GM12878 (cell line): ENCODE measurements at regions of chr3 and their contacts with region 1.

Region 1: DNA sequence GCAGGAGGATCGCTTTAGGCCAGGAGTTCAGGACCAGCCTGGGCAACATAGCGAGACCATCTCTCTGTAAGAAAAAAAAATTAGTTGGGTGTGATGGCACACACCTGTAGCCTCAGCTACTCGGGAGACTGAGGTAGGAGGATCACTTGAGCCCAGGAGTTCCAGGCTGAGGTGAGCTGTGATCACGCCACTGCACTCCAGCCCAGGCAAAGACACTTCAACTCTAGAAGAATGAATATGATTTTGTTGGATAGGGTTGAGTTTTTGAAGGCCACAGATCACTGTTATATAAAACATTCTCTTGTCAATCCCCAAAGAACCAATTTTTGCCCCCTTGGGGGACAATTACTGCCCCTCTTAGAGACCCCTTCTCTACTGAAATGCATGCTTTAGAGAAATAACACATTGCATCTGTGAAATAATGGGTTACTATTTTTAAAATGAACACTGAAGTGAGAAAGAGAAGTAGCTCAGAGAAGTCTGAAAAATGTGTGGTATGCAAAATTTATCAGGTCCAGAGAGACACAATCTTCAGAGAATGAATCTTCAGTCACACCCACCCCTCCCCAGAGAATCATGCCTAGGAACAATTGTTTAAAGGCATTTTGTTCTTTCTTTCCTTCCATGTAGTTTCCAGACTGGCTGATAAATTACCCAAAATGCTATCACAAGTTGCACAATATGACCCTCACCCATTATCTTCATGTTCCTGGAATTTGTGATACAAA is 42.7 kb downstream of the METTL6 start:
- DNase-seq: peak; percentile 84
- ATAC-seq: peak; percentile 87
- H3K4me3 ChIP-seq: peak overlapping the region; percentile 48; the same call in 1 of the 2 replicates
- H3K27ac ChIP-seq: peak overlapping the region; percentile 93
- H3K4me1 ChIP-seq: peaks cover 66% of the 10 kb centered on the region
- H3K27me3 ChIP-seq: no peaks in the 10 kb centered on the region
- CTCF ChIP-seq: no peak
- EP300 ChIP-seq: peak; percentile 86 to 93
- POLR2A ChIP-seq: no peak
- RAD21 ChIP-seq: 0 out of 2 replicates have a peak, but pooled peaks have one; percentile 1

Region 2: GRCh38 chr3:15159501-15160136 is 225.1 kb before region 1 on chr3:
- CTCF ChIA-PET with region 1: no interaction called
- POLR2A ChIA-PET with region 1: no interaction called
- RAD21 ChIA-PET with region 1: no interaction called
- SMC1A ChIA-PET with region 1: no interaction called
- in situ Hi-C with region 1: no loop called
- intact Hi-C with region 1: no loop called
- DNase-seq: peak; percentile 11
- ATAC-seq: peak; percentile 91
- H3K4me3 ChIP-seq: no peak overlapping the region
- H3K27ac ChIP-seq: no peak overlapping the region
- H3K4me1 ChIP-seq: no peaks in the 10 kb centered on the region
- H3K27me3 ChIP-seq: peaks cover 0 to 8% of the 10 kb centered on the region in 2 experiments; a peak in 1 of 4 replicates
- CTCF ChIP-seq: no peak
- EP300 ChIP-seq: no peak
- POLR2A ChIP-seq: no peak
- RAD21 ChIP-seq: no peak

Region 3: GRCh38 chr3:15291589-15292541 is 92.8 kb before region 1 on chr3:
- CTCF ChIA-PET with region 1: interaction called, 4 read pairs
- POLR2A ChIA-PET with region 1: interaction called, 6 read pairs
- RAD21 ChIA-PET with region 1: interaction called, 12 read pairs
- SMC1A ChIA-PET with region 1: interaction called, 8 read pairs
- in situ Hi-C with region 1: no loop called
- intact Hi-C with region 1: no loop called
- DNase-seq: peak; percentile 89
- ATAC-seq: peak; percentile 95
- H3K4me3 ChIP-seq: peak overlapping the region; percentile 17; the same call in 1 of the 2 replicates
- H3K27ac ChIP-seq: peak overlapping the region; percentile 73
- H3K4me1 ChIP-seq: peaks cover 38% of the 10 kb centered on the region
- H3K27me3 ChIP-seq: no peaks in the 10 kb centered on the region
- CTCF ChIP-seq: no peak
- EP300 ChIP-seq: peak; percentile 61 to 64; a peak in 3 of 4 replicates
- POLR2A ChIP-seq: no peak
- RAD21 ChIP-seq: no peak

Region 4: DNA sequence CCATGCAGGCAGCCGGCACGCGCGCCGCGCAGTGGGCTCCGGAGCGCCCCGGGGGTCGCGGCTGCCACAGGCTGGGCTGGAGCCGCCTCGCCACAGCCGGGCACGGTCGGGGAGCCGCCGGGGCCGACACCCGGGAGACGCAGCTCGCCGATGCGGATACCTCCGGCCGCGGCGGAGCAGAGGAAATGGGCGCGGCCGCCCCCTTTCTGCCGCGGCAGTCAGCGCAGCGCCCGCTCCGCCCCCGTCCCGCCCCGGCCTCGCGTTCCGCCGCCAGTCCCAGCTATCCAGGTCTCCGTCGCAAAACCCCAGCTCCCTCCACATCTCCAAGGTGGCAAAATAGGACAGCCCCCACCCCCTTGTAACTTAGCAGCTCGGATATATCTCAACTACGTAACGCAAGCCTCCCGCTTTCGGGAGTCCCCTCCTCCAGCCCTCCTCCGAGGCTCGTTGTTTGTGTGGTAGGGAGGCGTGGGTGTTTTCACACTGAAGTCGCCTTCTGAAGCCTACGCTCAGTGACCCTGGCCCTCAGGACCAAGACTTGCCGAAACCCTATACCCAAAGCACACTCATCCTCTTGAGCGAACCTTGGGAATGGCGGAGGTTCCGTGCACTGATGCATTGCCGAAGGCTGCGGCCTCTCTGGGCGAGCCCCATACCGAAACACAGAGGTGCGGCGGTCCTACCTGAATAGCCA is 52.1 kb before region 1 on chr3 and contains the start of gene SH3BP5:
- CTCF ChIA-PET with region 1: interaction called, 11 read pairs
- POLR2A ChIA-PET with region 1: interaction called, 5 read pairs
- RAD21 ChIA-PET with region 1: interaction called, 12 read pairs
- SMC1A ChIA-PET with region 1: interaction called, 10 read pairs
- in situ Hi-C with region 1: no loop called
- intact Hi-C with region 1: no loop called
- DNase-seq: no peak
- ATAC-seq: peak; percentile 85
- H3K4me3 ChIP-seq: peak within 1 kb of the TSS; percentile 86
- H3K27ac ChIP-seq: peak within 1 kb of the TSS; percentile 41
- H3K4me1 ChIP-seq: peaks cover 36% of the 10 kb centered on the region
- H3K27me3 ChIP-seq: no peaks in the 10 kb centered on the region
- CTCF ChIP-seq: peak; percentile 53 to 67 (median 59); a peak in 5 of 6 replicates
- EP300 ChIP-seq: no peak; a peak in 1 of 4 replicates
- POLR2A ChIP-seq: peak; percentile 84
- RAD21 ChIP-seq: peak; percentile 31; the same call in 1 of the 2 replicates
- polyA plus RNA-seq, gene SH3BP5: 14.9 to 33.8 TPM

Region 5: DNA sequence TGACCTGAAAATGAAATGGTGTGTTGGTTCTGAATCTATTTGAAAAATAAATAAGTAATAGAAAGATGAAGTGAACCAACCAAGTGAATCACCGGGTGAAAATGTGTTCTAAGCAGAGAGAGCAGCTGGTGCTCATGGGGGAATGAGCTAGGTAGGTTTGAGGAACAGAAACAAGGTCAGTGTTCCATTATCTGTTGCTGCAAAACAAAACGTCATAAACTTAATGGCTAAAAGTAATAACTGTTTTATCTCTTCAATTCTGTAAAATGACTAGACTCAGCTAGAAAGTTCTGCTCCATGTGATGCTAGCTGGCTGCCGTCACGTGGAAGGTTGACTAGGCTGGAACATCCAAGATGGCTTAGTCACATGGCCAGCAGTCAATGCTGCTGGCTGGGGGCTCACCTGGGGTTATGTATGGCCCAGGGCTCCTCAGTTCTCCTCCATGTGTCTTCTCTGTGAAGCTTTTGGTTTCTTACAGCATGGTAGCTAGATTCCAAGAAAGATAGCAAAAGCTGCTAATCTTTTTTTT is 39.0 kb before region 1 on chr3:
- CTCF ChIA-PET with region 1: interaction called, 5 read pairs
- POLR2A ChIA-PET with region 1: interaction called, 7 read pairs
- RAD21 ChIA-PET with region 1: interaction called, 14 read pairs
- SMC1A ChIA-PET with region 1: interaction called, 5 read pairs
- in situ Hi-C with region 1: no loop called
- intact Hi-C with region 1: no loop called
- DNase-seq: peak; percentile 86
- ATAC-seq: peak; percentile 94
- H3K4me3 ChIP-seq: no peak overlapping the region
- H3K27ac ChIP-seq: peak overlapping the region; percentile 83
- H3K4me1 ChIP-seq: peaks cover 42% of the 10 kb centered on the region
- H3K27me3 ChIP-seq: no peaks in the 10 kb centered on the region
- CTCF ChIP-seq: no peak
- EP300 ChIP-seq: peak; percentile 85 to 88
- POLR2A ChIP-seq: peak; percentile 59
- RAD21 ChIP-seq: no peak

Region 6: DNA sequence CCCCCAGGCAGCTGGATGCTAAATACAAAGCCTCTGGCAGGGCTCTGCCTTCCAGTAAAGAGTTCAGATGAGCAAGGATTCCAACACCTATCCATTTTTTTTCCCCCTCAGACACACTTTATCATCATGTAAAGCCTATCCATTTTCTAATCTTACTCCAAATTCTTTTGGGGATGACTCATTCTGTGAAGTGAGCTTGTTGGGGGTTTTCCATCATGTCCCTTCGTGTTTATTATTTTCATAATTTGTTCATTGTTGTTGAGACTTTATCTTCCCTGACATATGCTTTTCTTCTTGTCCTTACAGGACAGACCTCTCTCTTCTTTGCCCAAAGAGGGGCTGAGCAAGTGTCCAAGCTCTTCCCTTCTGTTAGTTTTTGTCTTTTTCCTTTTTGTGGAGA is 17.6 kb before region 1 on chr3:
- CTCF ChIA-PET with region 1: interaction called, 16 read pairs
- POLR2A ChIA-PET with region 1: interaction called, 13 read pairs
- RAD21 ChIA-PET with region 1: interaction called, 35 read pairs
- SMC1A ChIA-PET with region 1: interaction called, 49 read pairs
- in situ Hi-C with region 1: no loop called
- intact Hi-C with region 1: loop called (anchors 1 kb)
- DNase-seq: no peak
- ATAC-seq: peak; percentile 13
- H3K4me3 ChIP-seq: no peak overlapping the region
- H3K27ac ChIP-seq: no peak overlapping the region
- H3K4me1 ChIP-seq: peaks cover 24% of the 10 kb centered on the region
- H3K27me3 ChIP-seq: no peaks in the 10 kb centered on the region
- CTCF ChIP-seq: no peak
- EP300 ChIP-seq: 0 out of 4 replicates have a peak, but pooled peaks of 1 of the 2 experiments have one; percentile 33
- POLR2A ChIP-seq: no peak
- RAD21 ChIP-seq: no peak

Region 7: DNA sequence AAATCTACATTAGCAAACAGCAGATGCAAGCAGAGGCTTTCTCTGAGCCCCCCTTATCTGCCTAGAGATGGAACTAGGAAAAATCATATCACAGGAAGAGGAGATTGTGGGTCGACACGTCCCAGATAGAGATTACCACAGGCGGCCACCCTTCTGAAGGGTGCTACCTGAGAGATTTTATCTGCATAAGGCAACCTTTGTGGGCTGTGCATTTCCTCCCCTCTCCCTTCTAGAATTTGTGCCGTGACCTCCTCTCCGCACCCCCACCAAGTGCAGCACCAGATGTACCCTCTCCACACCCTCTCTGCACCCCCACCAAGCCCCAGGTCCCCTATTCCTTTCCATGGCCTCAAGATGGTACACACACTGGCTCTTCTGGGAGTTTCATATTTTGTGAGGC is 15.3 kb after region 1 on chr3:
- CTCF ChIA-PET with region 1: interaction called, 45 read pairs
- POLR2A ChIA-PET with region 1: interaction called, 5 read pairs
- RAD21 ChIA-PET with region 1: interaction called, 19 read pairs
- SMC1A ChIA-PET with region 1: interaction called, 59 read pairs
- in situ Hi-C with region 1: no loop called
- intact Hi-C with region 1: loop called (anchors 2 kb)
- DNase-seq: no peak
- ATAC-seq: no peak
- H3K4me3 ChIP-seq: no peak overlapping the region
- H3K27ac ChIP-seq: no peak overlapping the region
- H3K4me1 ChIP-seq: peaks cover 10% of the 10 kb centered on the region
- H3K27me3 ChIP-seq: no peaks in the 10 kb centered on the region
- CTCF ChIP-seq: no peak
- EP300 ChIP-seq: no peak
- POLR2A ChIP-seq: no peak
- RAD21 ChIP-seq: no peak

Region 8: GRCh38 chr3:15467227-15468181 is 82.8 kb after region 1 on chr3:
- CTCF ChIA-PET with region 1: no interaction called
- POLR2A ChIA-PET with region 1: interaction called, 6 read pairs
- RAD21 ChIA-PET with region 1: interaction called, 15 read pairs
- SMC1A ChIA-PET with region 1: no interaction called
- in situ Hi-C with region 1: no loop called
- intact Hi-C with region 1: no loop called
- DNase-seq: peak; percentile 85
- ATAC-seq: peak; percentile 97
- H3K4me3 ChIP-seq: no peak overlapping the region
- H3K27ac ChIP-seq: no peak overlapping the region
- H3K4me1 ChIP-seq: peaks cover 6% of the 10 kb centered on the region
- H3K27me3 ChIP-seq: no peaks in the 10 kb centered on the region
- CTCF ChIP-seq: no peak
- EP300 ChIP-seq: peak; percentile 66 to 78; a peak in 2 of 4 replicates
- POLR2A ChIP-seq: no peak
- RAD21 ChIP-seq: no peak

Region 9: GRCh38 chr3:15726043-15726442 is 341.4 kb after region 1 on chr3:
- CTCF ChIA-PET with region 1: no interaction called
- POLR2A ChIA-PET with region 1: no interaction called
- RAD21 ChIA-PET with region 1: no interaction called
- SMC1A ChIA-PET with region 1: no interaction called
- in situ Hi-C with region 1: no loop called
- intact Hi-C with region 1: no loop called
- DNase-seq: peak; percentile 60
- ATAC-seq: peak; percentile 93
- H3K4me3 ChIP-seq: no peak overlapping the region
- H3K27ac ChIP-seq: peak overlapping the region; percentile 71
- H3K4me1 ChIP-seq: peaks cover 18% of the 10 kb centered on the region
- H3K27me3 ChIP-seq: no peaks in the 10 kb centered on the region
- CTCF ChIP-seq: no peak
- EP300 ChIP-seq: no peak
- POLR2A ChIP-seq: no peak
- RAD21 ChIP-seq: no peak

Region 10: GRCh38 chr3:15755181-15755580 is 370.5 kb after region 1 on chr3:
- CTCF ChIA-PET with region 1: no interaction called
- POLR2A ChIA-PET with region 1: no interaction called
- RAD21 ChIA-PET with region 1: no interaction called
- SMC1A ChIA-PET with region 1: no interaction called
- in situ Hi-C with region 1: no loop called
- intact Hi-C with region 1: no loop called
- DNase-seq: no peak
- ATAC-seq: no peak
- H3K4me3 ChIP-seq: no peak overlapping the region
- H3K27ac ChIP-seq: no peak overlapping the region
- H3K4me1 ChIP-seq: 0 out of 2 replicates have a peak, but pooled peaks cover 3% of the 10 kb centered on the region
- H3K27me3 ChIP-seq: no peaks in the 10 kb centered on the region
- CTCF ChIP-seq: no peak
- EP300 ChIP-seq: no peak
- POLR2A ChIP-seq: no peak
- RAD21 ChIP-seq: no peak

Region 11: GRCh38 chr3:15845475-15845874 is 460.8 kb after region 1 on chr3:
- CTCF ChIA-PET with region 1: no interaction called
- POLR2A ChIA-PET with region 1: no interaction called
- RAD21 ChIA-PET with region 1: no interaction called
- SMC1A ChIA-PET with region 1: no interaction called
- in situ Hi-C with region 1: no loop called
- intact Hi-C with region 1: no loop called
- DNase-seq: no peak
- ATAC-seq: peak; percentile 90
- H3K4me3 ChIP-seq: no peak overlapping the region
- H3K27ac ChIP-seq: no peak overlapping the region
- H3K4me1 ChIP-seq: peaks cover 4% of the 10 kb centered on the region; the same call in 1 of the 2 replicates
- H3K27me3 ChIP-seq: no peaks in the 10 kb centered on the region
- CTCF ChIP-seq: no peak
- EP300 ChIP-seq: no peak
- POLR2A ChIP-seq: no peak
- RAD21 ChIP-seq: no peak